Caco-2 (cell line): ENCODE measurements at regions of chr12 and their contacts with region 1.

Region 1: GRCh38 chr12:79645235-79645630 is 45.5 kb downstream of the PAWR start:
- DNase-seq: no peak
- H3K4me3 ChIP-seq: no peak overlapping the region
- H3K4me3 Mint-ChIP-seq: no peak overlapping the region
- H3K27ac Mint-ChIP-seq: no peak overlapping the region
- H3K4me1 ChIP-seq: peaks cover 18% of the 10 kb centered on the region
- H3K4me1 Mint-ChIP-seq: peaks cover 5% of the 10 kb centered on the region
- H3K27me3 ChIP-seq: no peaks in the 10 kb centered on the region
- H3K27me3 Mint-ChIP-seq: no peaks in the 10 kb centered on the region
- CTCF ChIP-seq: no peak

Region 2: GRCh38 chr12:79591988-79592387 is 53.2 kb before region 1 on chr12:
- CTCF ChIA-PET with region 1: no interaction called
- POLR2A ChIA-PET with region 1: no interaction called
- intact Hi-C with region 1: no loop called
- DNase-seq: no peak
- H3K4me3 ChIP-seq: no peak overlapping the region
- H3K4me3 Mint-ChIP-seq: no peak overlapping the region
- H3K27ac Mint-ChIP-seq: no peak overlapping the region
- H3K4me1 ChIP-seq: 0 out of 2 replicates have a peak, but pooled peaks cover 3% of the 10 kb centered on the region
- H3K4me1 Mint-ChIP-seq: no peaks in the 10 kb centered on the region
- H3K27me3 ChIP-seq: no peaks in the 10 kb centered on the region
- H3K27me3 Mint-ChIP-seq: no peaks in the 10 kb centered on the region
- CTCF ChIP-seq: no peak

Region 3: GRCh38 chr12:79615596-79616560 is 29.4 kb before region 1 on chr12:
- CTCF ChIA-PET with region 1: no interaction called
- POLR2A ChIA-PET with region 1: no interaction called
- intact Hi-C with region 1: no loop called
- DNase-seq: no peak
- H3K4me3 ChIP-seq: no peak overlapping the region
- H3K4me3 Mint-ChIP-seq: no peak overlapping the region
- H3K27ac Mint-ChIP-seq: no peak overlapping the region
- H3K4me1 ChIP-seq: peaks cover 5% of the 10 kb centered on the region; the same call in 1 of the 2 replicates
- H3K4me1 Mint-ChIP-seq: peaks cover 12% of the 10 kb centered on the region
- H3K27me3 ChIP-seq: no peaks in the 10 kb centered on the region
- H3K27me3 Mint-ChIP-seq: no peaks in the 10 kb centered on the region
- CTCF ChIP-seq: no peak

Region 4: GRCh38 chr12:79659961-79660431 is 14.8 kb after region 1 on chr12:
- CTCF ChIA-PET with region 1: no interaction called
- POLR2A ChIA-PET with region 1: interaction called, 10 read pairs
- intact Hi-C with region 1: no loop called
- DNase-seq: no peak
- H3K4me3 ChIP-seq: no peak overlapping the region
- H3K4me3 Mint-ChIP-seq: no peak overlapping the region
- H3K27ac Mint-ChIP-seq: peak overlapping the region; percentile 66
- H3K4me1 ChIP-seq: peaks cover 24% of the 10 kb centered on the region
- H3K4me1 Mint-ChIP-seq: peaks cover 24% of the 10 kb centered on the region
- H3K27me3 ChIP-seq: no peaks in the 10 kb centered on the region
- H3K27me3 Mint-ChIP-seq: no peaks in the 10 kb centered on the region
- CTCF ChIP-seq: no peak